Left colon (tissue), 2 donors: ENCODE measurements at regions of chr1 and their contacts with region 1.

Region 1: GRCh38 chr1:52702886-52703787 is 5.0 kb upstream of the COA7 start:
- DNase-seq: peak; percentile 89 to 95
- ATAC-seq: peak; percentile 66

Region 2: DNA sequence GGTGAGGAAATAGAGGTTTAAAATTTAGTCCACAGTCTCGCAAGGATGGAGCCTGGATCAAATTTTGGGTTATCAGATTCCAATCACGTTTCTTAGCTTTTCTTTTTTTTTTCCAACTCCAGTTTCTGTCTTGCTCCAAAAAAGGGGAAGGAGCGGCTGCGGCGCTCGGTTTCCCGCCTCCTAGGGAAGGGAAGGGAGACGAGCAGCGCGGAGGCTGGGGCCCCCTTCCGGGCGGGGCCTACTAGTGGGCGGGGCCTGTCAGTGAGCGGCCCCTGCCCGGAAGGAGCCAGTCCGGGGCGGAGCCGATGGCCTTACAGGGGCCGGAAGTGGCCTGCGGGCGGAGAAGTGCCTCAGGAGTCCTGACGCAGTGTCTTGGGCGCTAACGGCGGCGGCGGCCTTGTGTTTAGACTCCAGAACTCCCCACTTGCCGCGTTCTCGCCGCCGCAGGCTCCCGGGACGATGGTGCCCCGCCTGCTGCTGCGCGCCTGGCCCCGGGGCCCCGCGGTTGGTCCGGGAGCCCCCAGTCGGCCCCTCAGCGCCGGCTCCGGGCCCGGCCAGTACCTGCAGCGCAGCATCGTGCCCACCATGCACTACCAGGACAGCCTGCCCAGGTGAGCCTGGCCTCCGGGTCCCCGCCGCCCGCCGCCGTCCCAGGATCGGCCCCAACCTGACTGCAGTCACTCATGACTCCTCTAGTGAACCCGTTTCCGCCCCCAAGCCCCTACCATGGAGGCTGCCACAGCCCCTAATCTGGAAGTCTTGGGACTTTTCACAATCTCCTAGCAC is 493.5 kb after region 1 on chr1 and contains the start of gene CPT2:
- intact Hi-C with region 1: loop called in 1 of 2 experiments (anchors 10 kb)
- DNase-seq: peak; percentile 95 to 96
- ATAC-seq: peak; percentile 97
- total RNA-seq, gene CPT2: 71.1 to 76.4 TPM